ENCODE measurements at regions of chr17 and their contacts with region 1.

Region 1: DNA sequence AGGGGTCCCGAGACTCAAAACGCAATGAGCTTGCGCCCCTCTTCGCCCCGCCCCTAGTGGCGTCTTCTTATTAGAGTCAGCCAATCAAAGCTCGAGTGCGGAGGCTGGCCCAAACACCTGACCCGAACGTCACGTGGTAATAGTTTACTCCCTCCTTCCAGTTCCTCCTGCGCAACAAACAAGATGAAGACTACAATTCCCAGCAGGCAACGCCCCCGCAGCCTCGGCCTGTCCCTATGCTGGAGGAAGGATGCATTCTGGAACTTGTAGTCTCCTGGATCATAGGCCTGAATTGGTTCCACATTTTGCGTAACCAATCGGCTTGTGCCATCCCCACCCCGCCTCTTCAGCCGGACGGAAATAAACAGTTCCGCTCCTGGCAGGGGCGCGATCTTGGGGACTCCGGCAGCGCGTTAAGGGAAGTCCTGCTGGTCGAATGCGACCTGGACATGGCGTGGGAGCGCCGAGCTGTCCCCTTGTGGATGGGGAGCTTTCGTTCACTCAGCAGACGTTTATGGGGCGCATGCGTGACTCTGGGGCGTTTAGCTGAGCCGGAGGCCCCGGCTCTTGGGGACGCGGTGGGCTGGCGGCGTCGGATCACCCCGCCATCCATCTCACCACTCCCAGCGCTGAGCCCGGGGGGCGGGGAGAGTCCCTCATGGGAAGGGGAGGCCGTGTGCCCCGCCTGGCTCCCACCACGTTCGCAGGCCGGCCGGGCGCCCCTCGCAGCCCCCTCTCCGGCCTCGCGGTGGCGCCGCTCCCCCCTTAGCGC is at the start of gene WBP2:
- DNase-seq: peak; percentile 93 to 100 (median 96)
- ATAC-seq: peak; percentile 90
- H3K4me3 ChIP-seq: peak within 1 kb of the TSS; percentile 79 to 83
- H3K4me3 Mint-ChIP-seq: no peak within 1 kb of the TSS
- H3K27ac ChIP-seq: peak within 1 kb of the TSS; percentile 84 to 94
- H3K27ac Mint-ChIP-seq: peak within 1 kb of the TSS; percentile 94
- H3K4me1 ChIP-seq: peaks cover 19% of the 10 kb centered on the region
- H3K4me1 Mint-ChIP-seq: peaks cover 29% of the 10 kb centered on the region
- H3K27me3 ChIP-seq: no peaks in the 10 kb centered on the region
- H3K27me3 Mint-ChIP-seq: no peaks in the 10 kb centered on the region
- CTCF ChIP-seq: peak; percentile 27
- total RNA-seq, gene WBP2: 69.1 to 80.2 TPM

Region 2: DNA sequence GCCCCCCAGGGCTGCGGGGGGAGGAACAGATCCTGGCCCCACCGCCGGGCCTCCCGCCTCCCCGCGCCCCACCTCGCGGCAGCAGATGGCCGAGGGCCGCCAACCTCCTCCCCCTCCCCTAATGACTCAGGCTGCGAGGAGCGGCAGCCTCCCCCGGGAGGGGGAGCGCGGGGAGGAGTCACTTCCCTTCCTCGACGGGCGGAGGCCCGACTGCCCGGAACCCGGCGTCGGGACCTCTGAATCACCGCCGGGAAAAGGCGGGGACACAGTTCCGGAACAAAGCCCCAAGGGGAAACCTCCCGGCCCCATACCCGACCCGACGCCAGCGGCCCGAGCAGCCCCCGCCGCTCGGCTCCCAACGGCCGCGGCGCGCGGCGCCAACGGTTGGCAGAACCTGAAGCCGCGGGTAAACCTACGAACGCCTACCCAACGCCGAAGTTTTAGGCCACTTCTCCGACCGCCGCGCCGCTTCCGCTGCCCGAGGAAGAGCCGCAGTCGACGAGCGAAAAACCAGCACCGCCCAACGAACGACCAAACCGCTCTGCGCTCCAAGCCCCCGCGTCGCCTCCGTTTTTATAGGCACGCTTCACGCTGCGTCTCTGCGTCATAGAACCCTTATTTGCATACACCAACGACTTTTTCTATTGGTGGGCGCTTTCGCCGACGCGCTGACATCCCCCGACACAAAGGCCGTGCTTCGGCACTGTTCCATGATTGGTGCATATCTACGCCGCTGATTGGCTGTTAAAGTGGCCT is 76.1 kb before region 1 on chr17:
- CTCF ChIA-PET with region 1: interaction called, 10 read pairs
- POLR2A ChIA-PET with region 1: interaction called, 45 read pairs
- intact Hi-C with region 1: loop called (anchors 1 kb)
- DNase-seq: peak; percentile 87 to 99 (median 93)
- ATAC-seq: peak; percentile 66
- H3K4me3 ChIP-seq: peak overlapping the region; percentile 87
- H3K4me3 Mint-ChIP-seq: peak overlapping the region; percentile 93
- H3K27ac ChIP-seq: peak overlapping the region; percentile 97
- H3K27ac Mint-ChIP-seq: peak overlapping the region; percentile 98
- H3K4me1 ChIP-seq: peaks cover 44% of the 10 kb centered on the region
- H3K4me1 Mint-ChIP-seq: peaks cover 46% of the 10 kb centered on the region
- H3K27me3 ChIP-seq: no peaks in the 10 kb centered on the region
- H3K27me3 Mint-ChIP-seq: no peaks in the 10 kb centered on the region
- CTCF ChIP-seq: no peak

Region 3: GRCh38 chr17:75845049-75845860 is 10.2 kb before region 1 on chr17:
- CTCF ChIA-PET with region 1: interaction called, 30 read pairs
- POLR2A ChIA-PET with region 1: interaction called, 67 read pairs
- intact Hi-C with region 1: loop called in 1 of 2 experiments (anchors 1 kb)
- DNase-seq: peak in 8 of 9 experiments; percentile 29 to 76 (median 61)
- ATAC-seq: peak; percentile 48
- H3K4me3 ChIP-seq: no peak overlapping the region
- H3K4me3 Mint-ChIP-seq: peak overlapping the region; percentile 71
- H3K27ac ChIP-seq: peak overlapping the region; percentile 44 to 93
- H3K27ac Mint-ChIP-seq: peak overlapping the region; percentile 64
- H3K4me1 ChIP-seq: peaks cover 35% of the 10 kb centered on the region
- H3K4me1 Mint-ChIP-seq: peaks cover 31% of the 10 kb centered on the region
- H3K27me3 ChIP-seq: no peaks in the 10 kb centered on the region
- H3K27me3 Mint-ChIP-seq: no peaks in the 10 kb centered on the region
- CTCF ChIP-seq: peak; percentile 65

Region 4: GRCh38 chr17:75896415-75897159 is 41.1 kb after region 1 on chr17 and contains the start of gene TRIM65:
- CTCF ChIA-PET with region 1: interaction called, 19 read pairs
- POLR2A ChIA-PET with region 1: interaction called, 58 read pairs
- intact Hi-C with region 1: loop called (anchors 1 kb)
- DNase-seq: peak; percentile 51 to 88 (median 78)
- ATAC-seq: peak; percentile 86
- H3K4me3 ChIP-seq: peak within 1 kb of the TSS; percentile 61 to 73
- H3K4me3 Mint-ChIP-seq: peak within 1 kb of the TSS; percentile 79
- H3K27ac ChIP-seq: peak within 1 kb of the TSS; percentile 47 to 66
- H3K27ac Mint-ChIP-seq: peak within 1 kb of the TSS; percentile 80
- H3K4me1 ChIP-seq: peaks cover 20% of the 10 kb centered on the region
- H3K4me1 Mint-ChIP-seq: peaks cover 27% of the 10 kb centered on the region
- H3K27me3 ChIP-seq: no peaks in the 10 kb centered on the region
- H3K27me3 Mint-ChIP-seq: no peaks in the 10 kb centered on the region
- CTCF ChIP-seq: peak; percentile 39
- total RNA-seq, gene TRIM65: 13.6 to 15.1 TPM

Region 5: DNA sequence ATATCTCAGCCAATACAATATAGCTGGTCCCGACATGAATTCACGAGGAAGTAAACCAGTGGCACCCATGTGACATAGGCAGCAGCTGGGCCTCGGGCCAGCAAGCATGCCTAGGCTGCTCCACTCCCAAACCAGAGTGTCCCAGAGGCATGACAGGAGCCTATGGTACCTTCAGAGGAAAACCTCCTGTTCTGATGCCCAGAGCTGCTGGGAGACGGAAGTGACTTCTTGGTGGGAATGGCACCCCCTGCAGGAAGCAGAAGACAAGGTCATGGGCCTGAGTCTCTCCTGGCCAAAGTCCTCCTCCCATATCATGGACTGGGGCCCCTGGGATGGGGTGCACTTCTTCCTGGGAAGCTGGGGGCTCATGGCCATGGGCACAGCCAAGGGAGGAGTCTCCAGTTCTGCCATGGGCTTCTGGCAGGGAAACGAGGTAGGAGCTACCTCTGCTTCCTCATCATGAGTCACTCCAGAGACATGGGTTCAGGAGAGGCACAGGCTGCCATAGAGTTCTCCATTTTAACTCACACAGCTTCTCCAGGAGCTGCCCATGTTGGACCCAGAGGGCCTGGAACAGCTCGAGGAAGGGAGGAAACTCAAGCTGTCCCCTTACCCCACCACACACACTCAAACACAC is 71.9 kb after region 1 on chr17:
- CTCF ChIA-PET with region 1: no interaction called
- POLR2A ChIA-PET with region 1: no interaction called
- intact Hi-C with region 1: no loop called
- DNase-seq: peak in 2 of 9 experiments; percentile 31 to 35
- ATAC-seq: no peak
- H3K4me3 ChIP-seq: no peak overlapping the region
- H3K4me3 Mint-ChIP-seq: no peak overlapping the region
- H3K27ac ChIP-seq: no peak overlapping the region
- H3K27ac Mint-ChIP-seq: no peak overlapping the region
- H3K4me1 ChIP-seq: no peaks in the 10 kb centered on the region
- H3K4me1 Mint-ChIP-seq: no peaks in the 10 kb centered on the region
- H3K27me3 ChIP-seq: no peaks in the 10 kb centered on the region
- H3K27me3 Mint-ChIP-seq: no peaks in the 10 kb centered on the region
- CTCF ChIP-seq: no peak

Region 6: DNA sequence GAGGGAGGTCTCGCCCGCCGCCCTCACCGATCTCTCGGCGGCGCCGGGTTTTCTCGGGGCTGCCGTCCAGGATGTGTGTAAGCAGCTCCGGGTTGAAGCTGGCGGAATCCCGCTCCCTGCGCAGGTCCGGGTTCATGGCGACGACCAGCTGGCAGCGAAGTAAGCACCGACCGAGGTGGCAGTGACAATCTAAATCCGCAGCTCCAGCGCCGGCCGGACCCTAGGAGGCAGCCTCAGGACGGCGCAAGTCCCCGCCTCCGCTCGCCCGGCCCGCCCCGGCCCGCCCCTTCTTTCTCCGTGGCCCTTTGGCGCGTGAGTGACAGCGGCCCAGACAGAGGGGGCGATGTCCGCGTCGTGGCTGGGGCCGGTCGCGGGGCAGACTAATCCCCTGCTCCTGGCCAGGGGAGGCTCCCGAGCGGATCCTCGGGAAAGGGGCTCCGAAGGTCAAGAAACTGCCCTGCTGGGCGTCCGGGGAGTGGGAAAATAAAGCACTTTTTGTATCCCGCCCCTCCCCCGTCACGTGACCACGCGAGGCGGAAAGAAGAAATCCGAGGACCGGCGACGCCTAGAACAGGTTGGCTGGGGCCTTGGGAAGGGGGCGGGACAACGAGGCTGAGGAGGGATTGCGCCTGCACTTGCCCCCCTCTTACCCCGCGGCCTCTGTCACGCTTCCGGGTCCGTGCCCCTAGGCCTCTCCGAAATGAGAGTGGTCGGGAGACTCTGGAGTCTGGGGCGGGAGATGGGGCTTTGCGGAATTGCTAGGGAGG is 123.6 kb after region 1 on chr17 and contains the starts of genes ACOX1 and TEN1:
- CTCF ChIA-PET with region 1: no interaction called
- POLR2A ChIA-PET with region 1: interaction called, 8 read pairs
- intact Hi-C with region 1: loop called (anchors 1 kb)
- DNase-seq: peak; percentile 90 to 98 (median 96)
- ATAC-seq: peak; percentile 97
- H3K4me3 ChIP-seq: peak within 1 kb of the TSS; percentile 85 to 93
- H3K4me3 Mint-ChIP-seq: peak within 1 kb of the TSS; percentile 99
- H3K27ac ChIP-seq: peak within 1 kb of the TSS; percentile 97 to 99
- H3K27ac Mint-ChIP-seq: peak within 1 kb of the TSS; percentile 100
- H3K4me1 ChIP-seq: peaks cover 15% of the 10 kb centered on the region
- H3K4me1 Mint-ChIP-seq: peaks cover 38% of the 10 kb centered on the region
- H3K27me3 ChIP-seq: no peaks in the 10 kb centered on the region
- H3K27me3 Mint-ChIP-seq: no peaks in the 10 kb centered on the region
- CTCF ChIP-seq: no peak
- total RNA-seq, gene ACOX1: 18.2 to 20.4 TPM
- total RNA-seq, gene TEN1: 14.6 to 17.1 TPM

Region 7: DNA sequence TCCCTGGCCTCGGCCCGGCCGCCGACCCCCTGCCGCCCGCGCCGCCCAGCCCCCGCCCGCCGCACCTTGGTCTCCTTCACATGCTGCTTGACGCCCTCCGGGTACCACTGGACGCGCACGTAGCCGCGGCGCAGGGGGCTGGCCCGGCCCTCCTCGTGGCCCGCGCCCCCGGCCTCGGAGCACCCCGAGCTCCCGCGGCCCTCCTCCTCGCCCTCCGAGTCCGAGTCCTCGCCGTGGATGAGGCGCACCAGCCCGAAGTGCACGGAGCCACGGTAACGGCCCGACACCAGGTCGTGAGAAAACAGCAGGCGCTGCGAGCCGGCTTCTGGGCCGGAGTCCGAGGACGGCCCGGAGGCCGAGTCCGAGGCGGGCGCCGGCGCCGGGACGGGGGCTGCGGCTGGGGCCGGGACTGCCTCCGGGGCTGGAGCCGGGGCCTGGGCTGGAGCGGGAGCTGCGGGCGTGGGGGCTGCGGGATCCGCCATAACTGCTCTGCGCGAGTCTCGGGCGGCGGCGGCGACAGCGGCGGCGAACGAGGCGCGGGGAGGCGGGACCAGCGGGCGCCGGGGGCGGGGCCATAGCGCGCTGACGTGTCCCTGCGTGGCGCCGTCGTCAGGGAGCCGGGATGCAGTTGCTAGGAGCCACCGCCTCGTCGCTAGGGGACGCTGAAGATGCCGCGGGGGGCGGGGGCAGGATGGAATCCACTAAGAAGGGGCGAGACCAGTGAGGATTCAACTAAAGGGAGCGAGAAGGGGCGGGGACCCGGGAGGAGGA is 597.3 kb after region 1 on chr17 and contains the start of gene UBE2O:
- CTCF ChIA-PET with region 1: no interaction called
- POLR2A ChIA-PET with region 1: no interaction called
- intact Hi-C with region 1: loop called in 1 of 2 experiments (anchors 1 kb)
- DNase-seq: peak; percentile 84 to 96 (median 94)
- ATAC-seq: peak; percentile 92
- H3K4me3 ChIP-seq: peak within 1 kb of the TSS; percentile 49 to 78
- H3K4me3 Mint-ChIP-seq: peak within 1 kb of the TSS; percentile 85
- H3K27ac ChIP-seq: peak within 1 kb of the TSS; percentile 50 to 64
- H3K27ac Mint-ChIP-seq: peak within 1 kb of the TSS; percentile 78
- H3K4me1 ChIP-seq: peaks cover 22% of the 10 kb centered on the region
- H3K4me1 Mint-ChIP-seq: peaks cover 39% of the 10 kb centered on the region
- H3K27me3 ChIP-seq: no peaks in the 10 kb centered on the region
- H3K27me3 Mint-ChIP-seq: no peaks in the 10 kb centered on the region
- CTCF ChIP-seq: peak; percentile 39
- total RNA-seq, gene UBE2O: 29.8 to 32.7 TPM

Measured in CD8-positive, alpha-beta T cell (primary cell).